ENCODE measurements at regions of chr21 and their contacts with region 1.

Region 1: DNA sequence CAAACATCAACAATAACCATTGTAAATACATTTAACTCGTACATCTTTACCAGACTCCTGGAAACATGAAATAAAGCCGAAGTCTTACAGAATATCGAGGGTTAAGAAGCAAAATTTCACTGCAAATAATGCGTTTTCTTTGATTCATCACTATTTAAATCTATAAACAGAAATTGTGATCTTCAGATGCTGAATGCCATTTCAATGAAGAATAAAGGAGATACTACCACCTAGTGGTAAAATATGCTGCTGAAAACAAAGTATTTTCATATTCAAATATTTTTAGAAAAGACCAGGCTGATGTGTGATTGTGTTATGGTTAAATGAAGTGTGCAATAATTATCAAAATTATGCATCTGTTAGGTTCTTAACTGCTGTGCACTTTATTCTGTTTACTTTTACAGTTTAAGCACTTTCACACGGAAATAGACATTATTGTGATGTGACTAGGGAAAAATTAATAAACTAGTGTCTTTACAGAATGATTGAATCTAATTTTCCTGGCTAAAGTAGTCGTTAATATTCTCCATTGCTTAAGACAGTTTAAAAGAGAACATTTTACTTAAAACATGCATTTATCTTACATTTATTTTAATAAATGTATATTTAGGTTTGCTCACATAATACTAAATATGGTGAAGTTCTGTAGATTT is 1093.1 kb downstream of the MRPL39 start:
- DNase-seq: no peak
- H3K4me3 ChIP-seq: no peak overlapping the region
- H3K27ac ChIP-seq: no peak overlapping the region
- H3K27me3 ChIP-seq: no peaks in the 10 kb centered on the region
- CTCF ChIP-seq: peak; percentile 69

Region 2: GRCh38 chr21:23853796-23854379 is 660.3 kb before region 1 on chr21:
- CTCF ChIA-PET with region 1: interaction called, 20 read pairs
- POLR2A ChIA-PET with region 1: no interaction called
- DNase-seq: peak; percentile 7
- H3K4me3 ChIP-seq: no peak overlapping the region
- H3K27ac ChIP-seq: no peak overlapping the region
- H3K27me3 ChIP-seq: no peaks in the 10 kb centered on the region
- CTCF ChIP-seq: peak; percentile 70

Region 3: DNA sequence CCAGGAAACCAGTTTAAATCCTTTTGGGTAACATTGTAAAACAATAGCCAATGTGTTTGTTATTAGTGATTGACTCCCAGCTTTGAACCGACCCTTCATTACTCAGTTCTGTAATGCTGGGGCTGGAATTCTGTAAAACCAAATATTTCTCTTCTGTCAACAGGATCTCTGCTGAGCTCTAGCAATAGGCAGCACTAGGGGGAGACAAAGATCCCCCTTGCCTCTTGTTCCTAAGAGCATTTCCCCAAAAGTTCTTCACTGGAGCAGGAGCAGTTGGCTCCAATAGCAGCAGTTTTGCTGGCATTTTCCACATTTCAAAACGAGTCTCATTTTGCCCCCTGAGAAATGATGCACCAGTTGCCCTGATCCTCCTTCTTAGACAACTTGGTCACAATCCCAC is 578.0 kb before region 1 on chr21:
- CTCF ChIA-PET with region 1: interaction called, 12 read pairs
- POLR2A ChIA-PET with region 1: no interaction called
- DNase-seq: peak; percentile 27
- H3K4me3 ChIP-seq: no peak overlapping the region
- H3K27ac ChIP-seq: no peak overlapping the region
- H3K27me3 ChIP-seq: no peaks in the 10 kb centered on the region
- CTCF ChIP-seq: peak; percentile 83

Region 4: DNA sequence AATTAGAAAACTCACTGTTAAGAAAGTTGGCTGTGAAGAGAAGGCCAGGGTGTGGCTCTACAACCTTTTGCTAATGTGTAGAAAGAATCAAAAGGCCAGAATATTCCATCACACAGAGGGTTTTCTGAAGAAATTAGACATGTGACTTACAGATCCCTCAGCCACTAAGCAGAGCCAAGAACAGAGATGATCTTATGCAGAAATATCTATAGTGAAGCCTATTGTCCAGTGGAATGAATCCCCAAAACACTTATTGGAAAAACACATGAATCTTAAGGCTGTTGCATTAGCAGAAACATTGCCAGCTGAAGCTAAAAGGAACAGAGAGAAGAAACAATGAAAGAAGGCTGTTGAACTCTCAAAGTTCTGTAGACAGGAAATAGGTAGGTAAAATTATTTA is 113.8 kb after region 1 on chr21:
- CTCF ChIA-PET with region 1: no interaction called
- POLR2A ChIA-PET with region 1: no interaction called
- DNase-seq: no peak
- H3K4me3 ChIP-seq: no peak overlapping the region
- H3K27ac ChIP-seq: no peak overlapping the region
- H3K27me3 ChIP-seq: no peaks in the 10 kb centered on the region
- CTCF ChIP-seq: no peak